ENCODE measurements at regions of chr19 and their contacts with region 1.

Region 1: DNA sequence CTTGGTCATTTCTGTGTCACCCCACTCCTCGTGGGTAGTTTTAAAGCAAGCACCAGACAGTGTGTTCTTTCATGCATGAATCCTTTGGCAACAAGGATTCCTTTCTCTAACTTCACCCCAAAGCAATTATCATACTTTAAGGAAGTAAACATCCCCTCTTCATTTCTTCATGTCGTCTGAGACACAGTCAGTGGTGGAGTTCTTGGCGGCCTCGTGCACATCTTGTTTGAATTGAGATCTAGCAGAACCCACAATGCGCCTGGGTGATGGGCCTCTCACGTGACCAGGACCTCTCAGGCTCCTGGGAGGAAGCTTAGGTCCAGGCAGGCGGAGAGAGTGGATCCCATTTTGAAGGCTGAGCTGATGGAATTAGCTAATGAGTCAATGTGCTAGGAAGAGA is 2.6 kb downstream of the ACSBG2 start:
- DNase-seq: no peak
- ATAC-seq: no peak
- H3K4me3 ChIP-seq: no peak overlapping the region
- H3K27ac ChIP-seq: no peak overlapping the region
- H3K4me1 ChIP-seq: no peaks in the 10 kb centered on the region
- H3K27me3 ChIP-seq: no peaks in the 10 kb centered on the region
- CTCF ChIP-seq: no peak
- POLR2A ChIP-seq: no peak

Region 2: GRCh38 chr19:6312018-6312417 is 174.0 kb after region 1 on chr19:
- intact Hi-C with region 1: loop called in 1 of 10 experiments (anchors 10 kb)
- DNase-seq: no peak
- ATAC-seq: no peak
- H3K4me3 ChIP-seq: no peak overlapping the region
- H3K27ac ChIP-seq: no peak overlapping the region
- H3K4me1 ChIP-seq: no peaks in the 10 kb centered on the region
- H3K27me3 ChIP-seq: peaks cover 0 to 5% (median 0%) of the 10 kb centered on the region in 9 donors
- CTCF ChIP-seq: no peak
- POLR2A ChIP-seq: no peak